ENCODE measurements at regions of chr17 and their contacts with region 1.

Region 1: DNA sequence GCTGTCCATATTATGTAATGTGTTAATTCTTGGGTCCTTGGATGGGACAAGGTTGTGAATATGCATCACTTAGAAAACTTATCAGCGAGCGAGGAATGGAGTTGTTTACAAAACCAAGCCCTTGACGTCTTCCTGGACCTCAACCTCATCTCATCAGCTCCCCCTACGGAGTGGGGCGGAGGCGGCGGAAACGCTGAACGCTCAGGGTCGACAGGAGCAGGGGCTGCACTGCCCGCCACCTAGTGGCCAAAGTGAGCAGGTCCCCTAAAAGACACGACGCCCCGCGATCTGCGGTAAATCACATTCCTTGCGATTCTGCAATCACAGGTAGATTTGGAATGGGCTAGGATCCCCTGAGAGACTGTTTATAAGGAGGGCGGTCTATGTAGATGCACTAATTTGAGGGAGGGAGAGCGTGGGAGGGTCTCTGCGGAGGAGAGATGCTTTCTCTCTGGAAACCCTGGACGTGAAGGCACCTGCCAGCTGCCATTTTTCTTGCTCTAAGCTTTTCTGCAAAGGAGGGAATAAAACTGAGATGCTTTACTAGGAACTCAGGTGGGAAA is 5.4 kb upstream of the ICAM2 start:
- DNase-seq: peak; percentile 95
- ATAC-seq: peak; percentile 71
- H3K4me3 Mint-ChIP-seq: peak overlapping the region; percentile 58
- H3K27ac Mint-ChIP-seq: peak overlapping the region; percentile 89
- H3K4me1 Mint-ChIP-seq: peaks cover 62% of the 10 kb centered on the region
- H3K27me3 Mint-ChIP-seq: no peaks in the 10 kb centered on the region

Region 2: DNA sequence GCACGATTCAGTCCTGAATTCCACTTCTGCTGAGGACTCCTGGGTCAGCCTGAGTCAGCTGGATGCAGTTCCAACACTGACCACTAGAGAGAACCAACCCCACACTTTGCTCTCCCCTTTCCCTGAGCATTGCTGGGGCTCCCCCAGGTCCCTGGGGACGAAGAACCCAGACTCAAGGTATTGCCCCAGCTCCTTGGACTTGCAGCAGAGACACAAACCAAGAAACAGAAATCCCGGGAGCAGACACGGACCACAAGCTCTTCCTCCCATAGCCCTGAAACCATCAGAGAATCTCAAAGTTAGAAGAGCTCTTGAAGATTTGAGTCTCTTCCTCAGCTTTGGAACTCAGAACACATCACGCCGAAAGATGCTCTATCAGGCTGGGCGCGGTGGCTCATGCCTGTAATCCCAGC is 106.5 kb before region 1 on chr17:
- CTCF ChIA-PET with region 1: interaction called, 18 read pairs
- POLR2A ChIA-PET with region 1: no interaction called
- intact Hi-C with region 1: loop called (anchors 1 kb)
- DNase-seq: peak; percentile 84
- ATAC-seq: peak; percentile 99
- H3K4me3 Mint-ChIP-seq: no peak overlapping the region
- H3K27ac Mint-ChIP-seq: no peak overlapping the region
- H3K4me1 Mint-ChIP-seq: peaks cover 6% of the 10 kb centered on the region
- H3K27me3 Mint-ChIP-seq: no peaks in the 10 kb centered on the region

Region 3: GRCh38 chr17:63984651-63985386 is 41.0 kb before region 1 on chr17:
- CTCF ChIA-PET with region 1: interaction called, 9 read pairs
- POLR2A ChIA-PET with region 1: no interaction called
- intact Hi-C with region 1: loop called in 1 of 2 experiments (anchors 2 kb)
- DNase-seq: peak; percentile 86
- ATAC-seq: peak; percentile 97
- H3K4me3 Mint-ChIP-seq: peak overlapping the region; percentile 30
- H3K27ac Mint-ChIP-seq: peak overlapping the region; percentile 78
- H3K4me1 Mint-ChIP-seq: peaks cover 23% of the 10 kb centered on the region
- H3K27me3 Mint-ChIP-seq: no peaks in the 10 kb centered on the region

Region 4: DNA sequence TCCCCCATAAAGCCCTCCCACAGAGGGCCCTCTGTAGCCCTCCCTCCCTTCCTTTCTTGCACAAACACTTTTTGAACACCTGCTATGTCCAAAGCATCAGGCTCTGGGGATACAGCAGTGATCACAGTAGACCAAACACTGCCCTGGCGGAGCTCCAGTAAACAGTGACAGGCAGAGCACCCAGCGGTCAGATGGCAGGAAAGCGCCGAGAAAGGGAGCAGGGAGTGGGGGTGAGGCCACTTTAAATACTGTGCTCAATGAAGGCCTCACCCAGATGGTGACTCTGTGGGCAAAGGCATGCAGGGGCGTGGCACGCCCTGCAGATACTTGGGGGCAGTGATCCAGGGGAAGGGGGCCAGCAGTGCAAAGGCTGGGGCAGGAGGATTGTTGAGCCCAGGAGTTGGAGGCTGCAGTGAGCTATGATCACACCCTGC is 20.1 kb before region 1 on chr17:
- CTCF ChIA-PET with region 1: interaction called, 12 read pairs
- POLR2A ChIA-PET with region 1: no interaction called
- intact Hi-C with region 1: no loop called
- DNase-seq: peak; percentile 2
- ATAC-seq: no peak
- H3K4me3 Mint-ChIP-seq: no peak overlapping the region
- H3K27ac Mint-ChIP-seq: peak overlapping the region; percentile 12
- H3K4me1 Mint-ChIP-seq: peaks cover 37% of the 10 kb centered on the region
- H3K27me3 Mint-ChIP-seq: no peaks in the 10 kb centered on the region

Region 5: DNA sequence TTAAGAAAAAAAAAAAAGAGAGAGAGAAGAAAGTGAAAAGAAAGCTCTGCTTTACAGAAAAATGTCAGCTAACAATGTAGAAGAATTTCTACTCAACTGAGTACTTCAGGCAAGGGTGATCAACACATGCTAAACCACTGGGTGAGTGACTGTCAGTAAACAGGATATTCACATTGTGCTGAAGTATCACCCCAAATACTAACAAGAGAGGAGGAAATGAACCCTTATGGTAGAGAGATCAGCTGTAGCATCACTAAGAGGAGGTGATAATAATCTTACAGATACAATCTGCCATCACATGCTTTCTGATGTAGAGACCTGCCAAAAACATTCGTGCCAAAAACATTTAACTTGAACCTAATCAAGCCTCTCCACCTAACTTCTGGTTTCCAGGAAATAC is 25.3 kb after region 1 on chr17:
- CTCF ChIA-PET with region 1: interaction called, 49 read pairs
- POLR2A ChIA-PET with region 1: no interaction called
- intact Hi-C with region 1: no loop called
- DNase-seq: no peak
- ATAC-seq: peak; percentile 96
- H3K4me3 Mint-ChIP-seq: no peak overlapping the region
- H3K27ac Mint-ChIP-seq: peak overlapping the region; percentile 71
- H3K4me1 Mint-ChIP-seq: peaks cover 27% of the 10 kb centered on the region
- H3K27me3 Mint-ChIP-seq: no peaks in the 10 kb centered on the region

Region 6: DNA sequence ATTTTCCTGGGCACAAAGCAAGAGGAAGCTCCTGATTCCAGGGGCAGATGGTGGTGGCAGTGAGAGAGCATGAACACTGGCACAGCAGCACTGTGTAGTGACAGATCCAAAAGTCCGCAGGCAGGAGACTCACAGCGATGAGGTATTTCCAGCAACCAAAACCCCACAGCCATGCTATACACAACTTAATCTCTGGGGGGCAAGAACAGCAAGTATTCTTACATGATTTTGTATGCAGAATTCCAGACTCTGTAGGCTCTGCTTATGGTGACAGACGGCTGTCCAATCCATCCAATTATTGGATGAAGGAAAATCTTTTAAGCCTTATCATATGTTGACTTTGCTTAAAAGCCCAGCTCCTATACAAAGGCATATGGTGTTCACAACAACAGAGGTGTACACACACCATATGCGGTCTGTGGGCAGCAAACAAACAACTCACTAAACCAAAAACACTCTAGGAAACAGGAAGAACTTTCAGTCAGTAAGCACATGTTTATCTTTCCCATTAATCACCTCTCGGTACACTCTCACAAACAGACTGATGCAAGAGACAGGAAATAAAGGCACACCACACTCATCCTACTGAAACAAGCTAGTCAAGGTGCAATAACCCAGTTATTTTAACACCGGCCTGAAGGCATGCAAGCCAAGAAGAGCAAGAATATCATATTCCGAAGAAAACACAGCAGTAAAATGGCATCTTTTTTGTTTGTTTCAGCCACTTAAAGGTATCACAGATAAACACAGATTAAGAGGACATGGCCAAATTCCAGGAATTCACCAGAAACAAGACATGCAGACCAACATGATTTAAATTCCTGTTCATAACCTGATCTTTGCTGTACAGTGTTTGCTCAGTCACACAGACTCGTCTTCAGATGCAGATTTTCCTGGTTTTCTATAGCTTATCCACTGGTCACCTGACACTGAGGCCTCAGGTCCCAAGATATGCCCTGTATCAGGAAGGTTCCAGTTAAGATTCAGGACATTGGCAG is 56.3 kb after region 1 on chr17:
- CTCF ChIA-PET with region 1: interaction called, 10 read pairs
- POLR2A ChIA-PET with region 1: no interaction called
- intact Hi-C with region 1: no loop called
- DNase-seq: peak; percentile 65
- ATAC-seq: peak; percentile 87
- H3K4me3 Mint-ChIP-seq: peak overlapping the region; percentile 56
- H3K27ac Mint-ChIP-seq: no peak overlapping the region
- H3K4me1 Mint-ChIP-seq: peaks cover 28% of the 10 kb centered on the region
- H3K27me3 Mint-ChIP-seq: no peaks in the 10 kb centered on the region

Region 7: DNA sequence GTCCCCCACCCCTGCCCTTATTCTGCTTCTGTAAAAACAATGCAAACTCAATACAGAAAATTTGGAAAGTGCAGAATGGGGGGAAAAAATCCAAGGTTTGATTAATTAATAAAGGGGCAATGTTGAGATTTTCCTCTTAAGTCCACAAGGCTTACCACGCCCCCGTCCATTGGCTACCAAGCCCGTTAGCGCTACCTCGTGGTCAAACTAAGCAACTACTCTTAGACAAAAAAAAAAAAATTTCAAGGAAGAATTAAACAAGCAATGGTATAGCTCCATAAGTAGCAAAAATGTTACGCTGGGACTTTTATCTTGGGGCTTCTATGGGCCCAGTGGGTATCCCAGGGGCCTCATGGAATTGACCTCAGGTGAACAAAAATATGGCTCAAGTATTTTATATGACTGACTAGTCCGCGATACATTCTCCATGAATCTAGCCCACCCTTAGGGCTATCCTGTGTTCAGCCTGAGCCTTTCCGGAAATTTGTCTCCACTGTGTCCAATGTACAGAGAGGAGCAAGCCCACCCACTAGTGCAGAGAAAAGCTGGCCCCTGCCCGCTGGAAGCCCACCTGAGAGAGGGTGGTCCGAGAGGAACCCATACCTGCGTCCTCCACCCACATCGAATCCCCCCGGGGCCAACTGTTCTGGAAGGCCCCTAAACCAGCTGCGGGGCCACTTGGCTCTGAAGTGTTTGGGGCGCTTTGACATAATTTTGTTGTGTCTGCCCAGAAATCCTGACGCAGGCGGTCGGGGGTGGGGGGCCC is 256.3 kb after region 1 on chr17:
- CTCF ChIA-PET with region 1: interaction called, 18 read pairs
- POLR2A ChIA-PET with region 1: no interaction called
- intact Hi-C with region 1: loop called in 1 of 2 experiments (anchors 2 kb)
- DNase-seq: peak; percentile 76
- ATAC-seq: peak; percentile 51
- H3K4me3 Mint-ChIP-seq: no peak overlapping the region
- H3K27ac Mint-ChIP-seq: no peak overlapping the region
- H3K4me1 Mint-ChIP-seq: no peaks in the 10 kb centered on the region
- H3K27me3 Mint-ChIP-seq: no peaks in the 10 kb centered on the region

Region 8: GRCh38 chr17:64306850-64307463 is 281.1 kb after region 1 on chr17:
- CTCF ChIA-PET with region 1: no interaction called
- POLR2A ChIA-PET with region 1: no interaction called
- intact Hi-C with region 1: no loop called
- DNase-seq: peak; percentile 83
- ATAC-seq: peak; percentile 66
- H3K4me3 Mint-ChIP-seq: no peak overlapping the region
- H3K27ac Mint-ChIP-seq: no peak overlapping the region
- H3K4me1 Mint-ChIP-seq: peaks cover 6% of the 10 kb centered on the region
- H3K27me3 Mint-ChIP-seq: no peaks in the 10 kb centered on the region

Measured in activated CD4-positive, alpha-beta T cell treated with anti-CD3 and anti-CD28 coated beads for 36 hours (primary cell).